IMR-90 (cell line): ENCODE measurements at regions of chr11 and their contacts with region 1.

Region 1: GRCh38 chr11:119144825-119145486 is 3.9 kb upstream of the ABCG4 start:
- DNase-seq: peak; percentile 68
- ATAC-seq: peak; percentile 90
- H3K4me3 ChIP-seq: no peak overlapping the region
- H3K27ac ChIP-seq: no peak overlapping the region
- H3K4me1 ChIP-seq: 0 out of 2 replicates have a peak, but pooled peaks cover 2% of the 10 kb centered on the region
- H3K27me3 ChIP-seq: peaks cover 24% of the 10 kb centered on the region
- CTCF ChIP-seq: peak; percentile 62
- POLR2A ChIP-seq: no peak
- RAD21 ChIP-seq: peak; percentile 50

Region 2: DNA sequence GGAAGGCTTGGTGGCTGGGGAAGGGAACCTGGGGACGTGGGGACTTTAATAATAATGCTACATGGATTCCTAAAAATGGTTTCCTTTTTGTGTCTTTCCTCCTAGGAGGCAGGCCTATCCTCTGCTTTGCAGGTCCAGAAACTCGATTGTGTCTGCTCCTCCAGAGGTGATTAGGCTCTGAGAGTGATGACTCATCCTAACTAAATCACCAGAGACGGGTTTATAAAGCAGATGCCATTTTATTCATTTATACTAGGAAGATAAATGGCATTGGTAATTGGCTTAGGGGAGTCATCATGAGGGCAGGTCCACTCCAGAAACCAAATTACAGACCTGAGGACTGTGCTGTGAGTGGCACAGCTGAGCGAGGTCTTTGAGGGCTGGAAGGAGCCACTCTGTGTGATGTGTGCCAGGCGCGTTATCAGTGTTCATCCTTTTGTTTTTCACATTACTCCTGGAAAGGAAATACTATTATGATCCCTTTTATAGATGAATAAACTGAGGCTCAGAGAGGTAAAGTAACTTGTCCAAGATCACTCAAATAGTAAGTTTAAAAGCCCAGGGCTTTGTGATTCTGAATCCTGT is 30.6 kb after region 1 on chr11:
- CTCF ChIA-PET with region 1: no interaction called
- POLR2A ChIA-PET with region 1: no interaction called
- dilution Hi-C with region 1: no loop called
- in situ Hi-C with region 1: no loop called
- intact Hi-C with region 1: no loop called
- DNase-seq: peak; percentile 58
- ATAC-seq: peak; percentile 80
- H3K4me3 ChIP-seq: no peak overlapping the region
- H3K27ac ChIP-seq: no peak overlapping the region
- H3K4me1 ChIP-seq: peaks cover 5% of the 10 kb centered on the region
- H3K27me3 ChIP-seq: no peaks in the 10 kb centered on the region
- CTCF ChIP-seq: no peak
- POLR2A ChIP-seq: no peak
- RAD21 ChIP-seq: no peak

Region 3: DNA sequence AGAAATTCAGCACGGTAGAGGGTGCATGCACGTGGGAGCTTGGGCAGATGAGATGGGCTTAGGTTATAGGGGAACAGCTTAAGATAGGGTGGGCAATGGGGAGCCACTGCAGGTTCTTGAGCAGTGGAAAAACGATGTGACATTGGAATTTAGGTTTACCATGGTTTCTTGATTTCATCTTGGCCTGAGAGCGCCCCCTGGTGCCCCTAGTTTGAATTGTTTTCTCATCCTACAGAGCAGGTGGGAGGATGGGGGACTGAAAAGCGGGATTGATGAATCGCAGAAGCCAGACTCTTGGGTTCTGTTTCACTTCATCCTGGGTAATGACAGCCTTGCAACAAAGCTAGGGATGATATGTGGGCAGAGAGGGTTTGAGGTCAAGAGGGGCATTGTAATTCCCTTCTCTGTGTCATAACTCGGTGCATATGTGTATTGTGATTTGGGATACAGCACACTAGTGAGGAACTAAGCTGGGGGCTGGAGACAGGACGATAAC is 178.6 kb after region 1 on chr11:
- CTCF ChIA-PET with region 1: interaction called, 3 read pairs
- POLR2A ChIA-PET with region 1: no interaction called
- dilution Hi-C with region 1: no loop called
- in situ Hi-C with region 1: no loop called
- intact Hi-C with region 1: loop called (anchors 5 kb)
- DNase-seq: peak; percentile 66
- ATAC-seq: no peak
- H3K4me3 ChIP-seq: no peak overlapping the region
- H3K27ac ChIP-seq: no peak overlapping the region
- H3K4me1 ChIP-seq: peaks cover 24% of the 10 kb centered on the region
- H3K27me3 ChIP-seq: no peaks in the 10 kb centered on the region
- CTCF ChIP-seq: peak; percentile 89
- POLR2A ChIP-seq: no peak
- RAD21 ChIP-seq: peak; percentile 81